Esophagus muscularis mucosa (tissue), 4 donors: ENCODE measurements at regions of chr4 and their contacts with region 1.

Region 1: DNA sequence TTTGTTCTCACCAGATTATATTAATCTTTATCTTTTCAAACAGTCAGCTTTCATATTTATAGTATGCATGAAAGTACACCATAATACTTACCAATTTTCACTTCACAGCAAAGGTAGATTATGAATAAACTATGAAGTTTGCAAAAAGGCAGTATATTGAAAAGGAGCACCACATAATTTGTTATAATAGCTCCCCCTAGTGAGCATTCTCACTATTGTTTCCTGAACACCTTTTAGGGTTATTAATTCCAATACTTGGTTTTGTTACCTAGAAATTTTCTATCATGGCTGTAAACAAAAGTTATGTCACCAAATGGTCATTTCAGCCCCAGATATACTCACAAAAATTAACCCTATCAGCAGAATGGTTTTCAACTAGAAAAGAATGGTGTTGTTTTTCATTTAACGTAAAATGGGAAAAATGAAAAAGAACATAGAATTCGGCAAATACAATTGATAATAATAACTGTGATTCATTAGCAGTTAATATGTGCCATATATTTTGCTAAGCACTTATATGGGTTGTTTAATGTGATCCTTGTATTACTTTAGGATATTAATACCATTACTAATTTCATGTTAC is 30.2 kb upstream of the NKX6-1 start:
- DNase-seq: no peak
- H3K4me3 ChIP-seq: no peak overlapping the region
- H3K27ac ChIP-seq: no peak overlapping the region
- H3K4me1 ChIP-seq: no peaks in the 10 kb centered on the region
- H3K27me3 ChIP-seq: no peaks in the 10 kb centered on the region
- CTCF ChIP-seq: peak; percentile 61 to 69 (median 67)
- EP300 ChIP-seq: no peak
- POLR2A ChIP-seq: no peak

Region 2: DNA sequence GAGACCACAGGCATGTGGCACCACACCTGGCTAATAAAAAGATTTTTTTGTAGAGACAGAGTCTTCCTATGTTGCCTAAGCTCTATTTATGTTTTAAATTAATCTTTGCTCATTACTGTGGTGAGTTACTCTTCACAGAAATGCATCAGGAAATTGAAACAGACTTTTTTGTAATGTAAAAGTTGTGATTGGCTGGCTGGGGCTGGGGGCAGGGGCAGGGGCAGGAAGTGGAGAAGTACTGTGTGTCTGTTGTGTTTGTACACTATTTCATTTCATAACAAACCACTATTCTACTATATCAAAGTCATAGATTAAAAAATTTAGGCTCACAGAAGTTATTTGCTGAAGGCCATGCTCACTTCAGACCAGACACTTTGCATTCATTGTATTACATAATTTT is 1025.3 kb before region 1 on chr4:
- intact Hi-C with region 1: loop called (anchors 10 kb)
- DNase-seq: no peak
- H3K4me3 ChIP-seq: no peak overlapping the region
- H3K27ac ChIP-seq: no peak overlapping the region
- H3K4me1 ChIP-seq: no peaks in the 10 kb centered on the region
- H3K27me3 ChIP-seq: no peaks in the 10 kb centered on the region
- CTCF ChIP-seq: no peak
- EP300 ChIP-seq: no peak
- POLR2A ChIP-seq: no peak

Region 3: GRCh38 chr4:83639849-83640493 is 889.3 kb before region 1 on chr4:
- intact Hi-C with region 1: loop called (anchors 5 kb)
- DNase-seq: no peak
- H3K4me3 ChIP-seq: no peak overlapping the region
- H3K27ac ChIP-seq: no peak overlapping the region
- H3K4me1 ChIP-seq: peaks cover 0 to 6% (median 2%) of the 10 kb centered on the region in 4 donors
- H3K27me3 ChIP-seq: no peaks in the 10 kb centered on the region
- CTCF ChIP-seq: peak; percentile 83 to 86 (median 85)
- EP300 ChIP-seq: no peak
- POLR2A ChIP-seq: no peak

Region 4: GRCh38 chr4:83771113-83771705 is 758.1 kb before region 1 on chr4:
- intact Hi-C with region 1: loop called (anchors 5 kb)
- DNase-seq: no peak
- H3K4me3 ChIP-seq: no peak overlapping the region
- H3K27ac ChIP-seq: no peak overlapping the region
- H3K4me1 ChIP-seq: no peaks in the 10 kb centered on the region
- H3K27me3 ChIP-seq: no peaks in the 10 kb centered on the region
- CTCF ChIP-seq: peak; percentile 59 to 78 (median 75)
- EP300 ChIP-seq: no peak
- POLR2A ChIP-seq: no peak